H1 (cell line): ENCODE measurements at regions of chr5 and their contacts with region 1.

Region 1: GRCh38 chr5:94863951-94864350 is 245.5 kb downstream of the SLF1 start:
- DNase-seq: no peak
- H3K4me3 ChIP-seq: no peak overlapping the region
- H3K27ac ChIP-seq: no peak overlapping the region
- H3K4me1 ChIP-seq: peaks cover 0 to 7% (median 2%) of the 10 kb centered on the region in 4 experiments; a peak in 4 of 7 replicates
- H3K27me3 ChIP-seq: no peaks in the 10 kb centered on the region
- CTCF ChIP-seq: no peak
- EP300 ChIP-seq: no peak
- POLR2A ChIP-seq: no peak
- RAD21 ChIP-seq: no peak

Region 2: DNA sequence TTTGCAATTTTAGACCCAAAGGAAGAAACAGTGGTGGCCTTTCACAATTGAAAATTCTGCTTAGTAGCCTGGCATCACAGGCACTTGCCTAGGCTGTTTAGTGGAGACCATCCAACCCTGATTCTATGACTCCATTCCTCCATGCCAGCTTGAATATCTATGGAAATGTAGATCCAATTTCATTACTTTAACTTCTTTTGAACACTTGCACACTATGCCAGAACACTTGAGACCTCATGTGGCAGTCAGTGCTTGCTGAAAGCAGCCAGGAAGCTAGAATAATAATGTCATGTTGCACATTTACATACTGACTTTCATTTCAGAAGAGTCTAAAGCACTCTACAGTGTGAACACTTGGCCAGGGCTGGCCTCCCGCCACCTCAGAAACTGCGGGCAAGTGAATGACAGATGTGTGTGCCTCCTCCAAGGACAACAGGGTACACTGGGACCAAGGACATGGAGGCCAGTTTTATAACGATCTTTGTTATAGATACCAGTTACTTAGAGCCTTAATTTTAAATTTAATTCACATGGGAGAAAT is 148.2 kb before region 1 on chr5:
- CTCF ChIA-PET with region 1: no interaction called
- POLR2A ChIA-PET with region 1: no interaction called
- DNase-seq: no peak
- H3K4me3 ChIP-seq: no peak overlapping the region
- H3K27ac ChIP-seq: no peak overlapping the region
- H3K4me1 ChIP-seq: no peaks in the 10 kb centered on the region
- H3K27me3 ChIP-seq: no peaks in the 10 kb centered on the region
- CTCF ChIP-seq: no peak
- EP300 ChIP-seq: no peak
- POLR2A ChIP-seq: no peak
- RAD21 ChIP-seq: no peak

Region 3: GRCh38 chr5:94849821-94850736 is 13.9 kb before region 1 on chr5:
- CTCF ChIA-PET with region 1: interaction called, 16 read pairs
- POLR2A ChIA-PET with region 1: interaction called, 4 read pairs
- DNase-seq: no peak
- H3K4me3 ChIP-seq: no peak overlapping the region
- H3K27ac ChIP-seq: no peak overlapping the region
- H3K4me1 ChIP-seq: peaks cover 0 to 3% (median 3%) of the 10 kb centered on the region in 4 experiments; a peak in 2 of 7 replicates
- H3K27me3 ChIP-seq: no peaks in the 10 kb centered on the region
- CTCF ChIP-seq: peak in 2 of 3 experiments; percentile 60 to 88; a peak in 2 of 4 replicates
- EP300 ChIP-seq: no peak
- POLR2A ChIP-seq: no peak
- RAD21 ChIP-seq: peak; percentile 95